Calu3 (cell line): ENCODE measurements at regions of chr21 and their contacts with region 1.

Region 1: GRCh38 chr21:33641336-33642026 is at the start of gene CRYZL1:
- DNase-seq: peak; percentile 98
- H3K4me3 Mint-ChIP-seq: peak within 1 kb of the TSS; percentile 77
- H3K27ac Mint-ChIP-seq: peak within 1 kb of the TSS; percentile 75
- H3K4me1 Mint-ChIP-seq: no peaks in the 10 kb centered on the region
- H3K27me3 Mint-ChIP-seq: no peaks in the 10 kb centered on the region
- CTCF ChIP-seq: no peak
- total RNA-seq, gene CRYZL1: 16.2 and 22.1 TPM in 2 replicates

Region 2: DNA sequence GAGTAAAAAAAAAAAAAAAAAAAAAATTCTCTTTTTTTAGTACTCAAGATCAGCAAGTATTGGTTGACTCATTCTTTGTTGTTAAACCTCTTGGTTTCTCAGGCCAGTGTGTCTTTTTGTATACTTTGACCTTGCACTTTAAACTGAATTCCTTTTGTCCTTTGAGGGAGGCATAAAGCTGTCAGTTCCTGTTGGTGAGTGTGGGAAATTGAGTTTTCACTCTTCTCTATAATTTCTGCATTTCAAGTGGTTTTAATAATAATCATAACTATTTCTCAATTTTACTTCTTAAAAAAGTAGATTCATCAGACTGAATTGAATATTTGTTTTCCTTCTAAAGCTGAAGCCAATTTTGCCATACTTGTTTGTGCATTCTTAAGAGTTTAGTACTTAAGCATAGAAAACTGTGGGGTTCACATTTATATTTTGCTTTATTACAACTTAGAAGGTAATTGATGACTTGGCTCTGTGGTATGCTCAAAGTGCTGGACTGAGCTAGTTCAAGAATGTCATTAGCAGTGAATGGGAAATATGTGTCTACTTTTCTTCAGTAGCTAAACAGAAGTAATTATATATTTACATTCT is 44.2 kb after region 1 on chr21:
- CTCF ChIA-PET with region 1: no interaction called
- intact Hi-C with region 1: loop called (anchors 5 kb)
- DNase-seq: no peak
- H3K4me3 Mint-ChIP-seq: no peak overlapping the region
- H3K27ac Mint-ChIP-seq: peak overlapping the region; percentile 79
- H3K4me1 Mint-ChIP-seq: peaks cover 29% of the 10 kb centered on the region
- H3K27me3 Mint-ChIP-seq: no peaks in the 10 kb centered on the region
- CTCF ChIP-seq: no peak

Region 3: DNA sequence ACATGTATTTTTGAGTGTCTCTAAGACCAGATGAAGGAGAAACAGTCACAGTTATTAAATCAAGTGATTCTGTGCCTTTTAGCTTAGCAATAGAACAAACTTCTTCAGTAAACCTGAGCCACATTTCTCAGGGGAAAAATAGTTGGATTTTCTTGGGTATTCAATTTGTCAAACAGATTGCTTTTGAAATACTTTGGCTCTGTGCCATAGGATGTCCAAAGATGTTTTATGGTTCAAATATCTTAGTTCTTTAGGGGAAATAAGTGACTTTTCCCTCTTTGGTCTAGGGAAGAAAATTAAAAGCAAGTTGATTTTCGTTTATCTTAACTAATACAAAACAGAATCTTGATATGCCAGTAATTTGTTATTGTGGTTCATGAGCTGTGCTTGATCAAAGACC is 148.2 kb after region 1 on chr21:
- CTCF ChIA-PET with region 1: no interaction called
- intact Hi-C with region 1: loop called (anchors 10 kb)
- DNase-seq: no peak
- H3K4me3 Mint-ChIP-seq: no peak overlapping the region
- H3K27ac Mint-ChIP-seq: no peak overlapping the region
- H3K4me1 Mint-ChIP-seq: no peaks in the 10 kb centered on the region
- H3K27me3 Mint-ChIP-seq: no peaks in the 10 kb centered on the region
- CTCF ChIP-seq: no peak